Right cardiac atrium (tissue), 5 donors: ENCODE measurements at regions of chr2 and their contacts with region 1.

Region 1: GRCh38 chr2:173402405-173402974 is 47.8 kb downstream of the CDCA7 start:
- DNase-seq: peak; percentile 77 to 87 (median 86)
- ATAC-seq: peak; percentile 94 to 96
- H3K4me3 ChIP-seq: peak overlapping the region; percentile 44
- H3K27ac ChIP-seq: no peak overlapping the region
- H3K4me1 ChIP-seq: no peaks in the 10 kb centered on the region
- H3K27me3 ChIP-seq: no peaks in the 10 kb centered on the region

Region 2: GRCh38 chr2:173448938-173449471 is 46.5 kb after region 1 on chr2:
- intact Hi-C with region 1: loop called in 2 of 4 experiments (anchors 5 kb)
- DNase-seq: peak; percentile 82 to 89 (median 87)
- ATAC-seq: peak; percentile 81 to 91
- H3K4me3 ChIP-seq: peak overlapping the region; percentile 29
- H3K27ac ChIP-seq: peak overlapping the region; percentile 60
- H3K4me1 ChIP-seq: no peaks in the 10 kb centered on the region
- H3K27me3 ChIP-seq: no peaks in the 10 kb centered on the region

Region 3: DNA sequence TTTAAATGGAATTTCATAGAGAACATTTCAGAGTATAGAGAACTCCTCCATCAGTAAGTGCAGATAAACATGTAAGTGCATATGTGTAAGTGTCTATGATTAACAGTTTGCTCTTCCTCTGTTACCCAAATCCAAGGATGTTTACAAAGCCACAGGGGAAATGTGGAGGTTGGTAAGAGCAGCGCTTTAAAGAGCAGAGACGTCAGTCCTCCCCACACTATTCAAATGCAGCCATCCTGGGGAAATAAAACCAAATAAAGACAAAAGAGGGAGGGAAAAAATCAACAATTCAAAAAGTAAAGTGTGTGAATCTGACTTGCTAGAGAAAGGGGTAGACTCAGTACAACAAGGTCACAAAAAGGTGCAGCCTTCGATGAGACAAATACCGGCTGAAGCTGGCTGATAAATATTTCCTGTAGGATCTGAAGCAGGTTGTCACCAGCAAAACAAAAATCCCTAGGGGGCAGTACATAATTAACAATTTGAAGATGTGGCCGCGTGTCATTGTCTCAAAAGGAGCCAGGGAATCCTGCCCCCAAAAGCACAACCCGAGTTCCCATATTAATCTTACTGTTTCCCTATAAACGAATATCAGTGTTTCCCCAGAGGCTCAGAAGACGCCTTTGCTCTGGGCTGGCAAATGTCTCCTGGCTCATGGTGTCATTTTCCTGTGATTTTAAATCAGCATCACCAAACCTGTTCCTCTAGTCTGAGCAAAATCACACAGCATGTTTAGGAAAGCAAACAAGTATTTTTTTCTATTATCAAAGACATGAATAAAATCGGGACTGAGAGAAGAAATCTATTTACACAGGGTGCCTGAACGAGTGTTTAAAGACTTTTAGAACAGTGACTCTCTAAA is 168.8 kb after region 1 on chr2:
- intact Hi-C with region 1: loop called in 1 of 4 experiments (anchors 10 kb)
- DNase-seq: no peak
- ATAC-seq: no peak
- H3K4me3 ChIP-seq: no peak overlapping the region
- H3K27ac ChIP-seq: no peak overlapping the region
- H3K4me1 ChIP-seq: no peaks in the 10 kb centered on the region
- H3K27me3 ChIP-seq: no peaks in the 10 kb centered on the region